ENCODE measurements at regions of chr17 and their contacts with region 1.

Region 1: GRCh38 chr17:81890447-81891299 is 713 bp downstream of the ALYREF start:
- DNase-seq: peak; percentile 71
- H3K4me3 ChIP-seq: peak overlapping the region; percentile 77
- H3K27ac ChIP-seq: peak overlapping the region; percentile 59
- H3K4me1 ChIP-seq: peaks cover 35% of the 10 kb centered on the region
- CTCF ChIP-seq: no peak

Region 2: GRCh38 chr17:81833160-81833920 is 57.3 kb before region 1 on chr17 and contains the start of gene MCRIP1:
- CTCF ChIA-PET with region 1: no interaction called
- POLR2A ChIA-PET with region 1: no interaction called
- intact Hi-C with region 1: loop called (anchors 5 kb)
- DNase-seq: peak; percentile 98
- H3K4me3 ChIP-seq: peak within 1 kb of the TSS; percentile 88
- H3K27ac ChIP-seq: peak within 1 kb of the TSS; percentile 74
- H3K4me1 ChIP-seq: peaks cover 25% of the 10 kb centered on the region
- CTCF ChIP-seq: no peak
- total RNA-seq, gene MCRIP1: 249 and 288 TPM in 2 replicates

Region 3: DNA sequence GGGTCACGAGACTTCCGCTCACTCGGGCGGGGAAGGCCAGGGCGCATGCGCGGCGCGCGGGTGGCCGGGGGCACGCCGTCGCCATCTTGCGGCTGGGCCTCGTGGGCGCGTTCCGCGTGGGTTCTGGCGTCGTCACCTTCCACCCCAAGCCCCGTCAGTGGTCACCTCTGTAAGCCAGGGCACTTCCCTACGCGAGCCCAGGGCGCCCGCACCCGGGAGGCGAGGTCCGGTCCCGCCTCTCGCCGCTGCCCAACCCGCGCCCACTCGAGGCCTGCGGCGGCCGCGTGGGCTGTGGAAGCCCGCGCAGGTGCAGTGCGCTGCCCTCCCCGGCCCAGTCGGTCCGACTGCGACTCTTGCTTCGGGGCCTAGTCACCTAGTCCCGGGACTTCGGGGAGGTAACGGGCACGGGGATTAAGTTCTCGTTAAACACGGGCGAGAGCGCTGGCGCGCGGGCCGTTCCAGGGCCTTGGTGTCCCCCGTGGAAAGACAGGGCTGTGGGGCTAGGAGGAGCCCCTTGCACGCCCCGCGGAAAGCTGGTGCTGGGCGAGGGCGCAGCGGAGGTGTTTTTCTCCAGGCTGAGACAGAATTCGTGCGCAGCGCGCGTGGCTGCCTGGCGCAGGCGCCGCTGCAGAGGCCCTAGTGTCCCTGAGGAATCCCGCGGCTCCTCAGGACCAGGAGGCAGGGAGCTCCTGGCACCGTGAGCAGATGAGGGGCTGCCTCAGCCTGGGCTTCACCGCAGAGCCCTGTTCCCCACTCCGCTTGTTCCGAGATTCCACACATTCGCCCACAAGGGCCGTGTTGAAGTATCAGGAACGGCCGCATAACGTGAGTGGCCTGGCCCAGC is 19.1 kb before region 1 on chr17:
- CTCF ChIA-PET with region 1: no interaction called
- POLR2A ChIA-PET with region 1: interaction called, 18 read pairs
- intact Hi-C with region 1: loop called (anchors 1 kb)
- DNase-seq: peak; percentile 96
- H3K4me3 ChIP-seq: peak overlapping the region; percentile 97
- H3K27ac ChIP-seq: peak overlapping the region; percentile 84
- H3K4me1 ChIP-seq: peaks cover 64% of the 10 kb centered on the region
- CTCF ChIP-seq: peak; percentile 59

Region 4: GRCh38 chr17:81911277-81911961 is 20.7 kb after region 1 on chr17 and contains the start of gene PCYT2:
- CTCF ChIA-PET with region 1: no interaction called
- POLR2A ChIA-PET with region 1: interaction called, 21 read pairs
- intact Hi-C with region 1: loop called (anchors 1 kb)
- DNase-seq: peak; percentile 98
- H3K4me3 ChIP-seq: peak within 1 kb of the TSS; percentile 85
- H3K27ac ChIP-seq: peak within 1 kb of the TSS; percentile 22
- H3K4me1 ChIP-seq: peaks cover 15% of the 10 kb centered on the region
- CTCF ChIP-seq: peak; percentile 62
- total RNA-seq, gene PCYT2: 70.1 and 70.4 TPM in 2 replicates

Region 5: GRCh38 chr17:81917565-81918332 is 27.1 kb after region 1 on chr17 and contains the start of gene SIRT7:
- CTCF ChIA-PET with region 1: no interaction called
- POLR2A ChIA-PET with region 1: interaction called, 13 read pairs
- intact Hi-C with region 1: no loop called
- DNase-seq: peak; percentile 94
- H3K4me3 ChIP-seq: peak within 1 kb of the TSS; percentile 92
- H3K27ac ChIP-seq: peak within 1 kb of the TSS; percentile 26
- H3K4me1 ChIP-seq: peaks cover 23% of the 10 kb centered on the region
- CTCF ChIP-seq: 0 out of 2 replicates have a peak, but pooled peaks have one; percentile 15
- total RNA-seq, gene SIRT7: 43.3 and 49.1 TPM in 2 replicates

Region 6: DNA sequence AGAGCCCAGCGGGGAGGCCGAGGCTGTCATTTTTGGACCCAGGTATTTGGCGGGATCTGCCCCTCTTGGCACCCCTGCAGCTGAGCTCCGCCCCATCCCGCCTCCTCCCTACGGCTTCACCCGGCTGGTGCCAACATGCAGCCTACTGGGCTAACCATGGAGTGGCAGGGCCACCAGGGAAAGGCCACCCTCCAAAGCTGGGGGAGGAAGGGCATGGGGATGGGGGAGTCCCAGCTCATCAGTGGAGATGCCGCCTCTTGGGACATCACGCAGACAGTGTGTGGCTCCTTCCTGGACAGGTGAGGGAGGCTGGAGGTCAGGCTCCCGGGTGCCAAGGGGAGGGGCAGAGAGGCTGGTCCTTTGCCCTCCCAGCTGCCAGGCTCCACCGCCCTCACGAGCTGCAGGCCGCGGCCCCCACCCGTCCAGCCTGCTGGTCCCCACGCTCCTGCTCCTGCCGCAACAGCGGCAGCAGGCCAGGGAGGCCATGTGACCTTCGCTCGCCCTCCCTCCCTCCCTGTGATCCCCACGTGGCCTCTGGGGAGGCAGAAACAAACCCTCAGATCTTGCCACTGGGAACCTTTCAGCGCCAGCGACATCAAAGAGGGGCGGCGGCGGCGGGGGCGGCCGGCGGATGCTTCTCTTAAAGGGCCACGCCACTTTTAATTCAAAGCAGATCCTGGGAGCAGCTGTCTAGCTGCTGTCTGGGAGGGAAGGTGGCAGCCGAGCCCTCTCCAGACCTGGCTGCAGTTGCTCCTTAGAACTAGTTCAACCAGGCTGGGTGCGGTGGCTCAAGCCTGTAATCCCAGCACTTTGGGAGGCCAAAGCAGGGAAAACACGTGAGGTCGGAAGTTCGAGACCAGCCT is 77.1 kb after region 1 on chr17:
- CTCF ChIA-PET with region 1: no interaction called
- POLR2A ChIA-PET with region 1: no interaction called
- intact Hi-C with region 1: loop called (anchors 5 kb)
- DNase-seq: peak; percentile 97
- H3K4me3 ChIP-seq: peak overlapping the region; percentile 68
- H3K27ac ChIP-seq: peak overlapping the region; percentile 44
- H3K4me1 ChIP-seq: peaks cover 29% of the 10 kb centered on the region
- CTCF ChIP-seq: no peak

Region 7: GRCh38 chr17:82022981-82023374 is 132.3 kb after region 1 on chr17 and contains the start of gene LRRC45:
- CTCF ChIA-PET with region 1: no interaction called
- POLR2A ChIA-PET with region 1: no interaction called
- intact Hi-C with region 1: loop called (anchors 1 kb)
- DNase-seq: peak; percentile 100
- H3K4me3 ChIP-seq: peak within 1 kb of the TSS; percentile 94
- H3K27ac ChIP-seq: peak within 1 kb of the TSS; percentile 44
- H3K4me1 ChIP-seq: peaks cover 30% of the 10 kb centered on the region
- CTCF ChIP-seq: no peak
- total RNA-seq, gene LRRC45: 52.0 and 62.6 TPM in 2 replicates

Measured in OCI-LY7 (cell line).